ENCODE measurements at regions of chr18 and their contacts with region 1.

Region 1: GRCh38 chr18:32289483-32290075 is 99.7 kb downstream of the MEP1B start:
- DNase-seq: no peak
- H3K4me3 ChIP-seq: no peak overlapping the region
- CTCF ChIP-seq: peak; percentile 73

Region 2: GRCh38 chr18:32010124-32010738 is 279.3 kb before region 1 on chr18:
- CTCF ChIA-PET with region 1: no interaction called
- POLR2A ChIA-PET with region 1: no interaction called
- DNase-seq: no peak
- H3K4me3 ChIP-seq: no peak overlapping the region
- CTCF ChIP-seq: no peak

Region 3: DNA sequence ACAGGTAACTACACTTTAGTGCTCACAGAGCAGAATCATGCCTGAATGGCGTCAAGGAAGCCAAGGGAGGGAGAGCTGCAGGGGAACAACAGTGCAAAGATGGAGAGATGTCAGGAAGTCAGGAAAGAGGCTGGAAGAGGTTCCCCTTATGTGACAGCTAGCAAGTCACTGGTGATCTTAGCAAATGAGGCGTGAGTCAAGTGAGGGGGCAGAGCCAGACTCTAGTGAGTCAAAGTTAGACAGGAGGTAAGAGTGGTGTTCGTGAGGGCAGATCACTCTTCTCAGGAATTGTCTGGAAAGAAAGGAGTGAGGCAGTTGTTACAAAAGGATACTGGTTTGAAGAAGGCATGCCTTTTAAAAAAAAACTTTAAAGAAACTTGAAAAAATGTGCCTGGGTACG is 12.7 kb before region 1 on chr18:
- CTCF ChIA-PET with region 1: interaction called, 49 read pairs
- POLR2A ChIA-PET with region 1: no interaction called
- DNase-seq: no peak
- H3K4me3 ChIP-seq: no peak overlapping the region
- CTCF ChIP-seq: no peak

Region 4: DNA sequence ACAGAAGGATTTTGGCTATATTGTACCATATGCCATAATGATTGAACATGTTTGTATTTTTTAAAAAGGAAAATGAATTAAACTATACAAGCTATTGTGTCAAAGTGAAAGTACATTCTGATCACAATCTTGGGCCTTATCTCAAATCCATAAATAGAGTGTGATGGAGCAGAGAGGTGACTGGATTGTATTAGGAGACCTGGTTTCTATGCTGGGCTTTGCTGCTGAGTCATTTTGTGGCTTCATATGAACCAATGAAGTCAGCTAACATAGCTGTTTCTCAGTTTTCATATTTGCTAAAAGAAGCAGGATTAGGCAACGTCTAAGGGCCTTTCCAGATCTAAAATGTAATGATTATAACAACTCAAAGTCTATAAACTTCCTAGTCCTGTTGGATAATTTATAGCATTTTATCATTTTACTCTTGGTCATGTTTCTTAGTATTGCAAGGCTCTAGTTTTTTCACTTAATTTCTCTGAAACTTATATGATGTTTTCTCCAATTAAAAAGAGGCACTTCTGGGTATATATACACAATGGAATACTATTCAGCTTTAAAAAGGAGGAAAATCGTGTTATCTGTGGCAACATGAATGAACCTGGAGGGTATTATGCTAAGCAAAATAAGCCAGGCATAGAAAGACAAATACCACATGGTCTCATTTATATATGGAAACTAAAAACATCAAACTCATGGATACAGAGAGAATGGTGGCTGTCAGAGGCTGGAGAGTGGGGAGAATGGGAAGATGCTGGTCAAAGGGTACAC is 12.6 kb after region 1 on chr18:
- CTCF ChIA-PET with region 1: interaction called, 28 read pairs
- POLR2A ChIA-PET with region 1: no interaction called
- DNase-seq: no peak
- H3K4me3 ChIP-seq: no peak overlapping the region
- CTCF ChIP-seq: no peak

Region 5: GRCh38 chr18:32310101-32310500 is 20.5 kb after region 1 on chr18:
- CTCF ChIA-PET with region 1: interaction called, 14 read pairs
- POLR2A ChIA-PET with region 1: no interaction called
- DNase-seq: no peak
- H3K4me3 ChIP-seq: no peak overlapping the region
- CTCF ChIP-seq: no peak

Region 6: GRCh38 chr18:32315881-32316280 is 26.3 kb after region 1 on chr18:
- CTCF ChIA-PET with region 1: interaction called, 14 read pairs
- POLR2A ChIA-PET with region 1: no interaction called
- DNase-seq: no peak
- H3K4me3 ChIP-seq: no peak overlapping the region
- CTCF ChIP-seq: no peak

Measured in AG04449 (cell line).